Posterior vena cava (tissue), 2 donors: ENCODE measurements at regions of chr4 and their contacts with region 1.

Region 1: DNA sequence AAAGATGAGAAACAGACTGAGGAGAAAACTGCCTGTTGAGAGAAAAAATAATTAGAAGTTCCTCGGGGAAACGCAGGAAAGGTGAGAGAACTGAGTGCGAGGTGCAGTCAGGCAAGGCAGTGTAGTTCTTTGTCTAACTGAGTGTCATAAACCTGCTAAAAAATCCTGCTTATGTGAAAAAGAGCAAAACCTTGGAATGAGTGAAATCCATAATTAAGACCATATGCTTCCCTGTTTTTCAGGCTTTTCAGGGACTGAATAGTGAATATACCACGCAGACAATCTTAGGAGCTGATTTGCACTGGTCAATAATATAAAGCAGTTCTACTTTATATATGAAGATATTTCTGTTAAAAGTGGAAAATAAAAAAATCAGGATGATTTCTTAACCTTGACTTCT is 104.9 kb downstream of the RASGEF1B start:
- DNase-seq: no peak

Region 2: DNA sequence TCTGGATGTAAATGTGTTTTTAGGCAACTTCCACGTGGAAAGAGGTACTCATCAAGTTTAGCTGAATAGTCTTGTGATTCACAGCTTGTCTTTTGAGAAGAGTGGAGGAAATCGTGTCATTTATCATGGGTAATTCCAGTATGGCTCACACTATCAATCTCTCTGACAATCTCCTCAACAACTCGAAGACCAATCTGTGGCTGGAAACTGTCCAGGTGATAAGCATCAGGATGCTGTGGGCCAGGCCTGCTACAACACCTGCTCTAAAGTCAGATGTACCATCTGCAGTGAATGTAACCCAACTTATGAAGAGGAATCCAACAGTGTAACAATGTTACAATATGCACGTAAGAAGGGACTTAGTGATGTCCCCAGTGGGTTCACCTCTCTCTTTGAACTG is 1826.6 kb before region 1 on chr4:
- intact Hi-C with region 1: no loop called
- DNase-seq: no peak

Region 3: GRCh38 chr4:81307991-81308390 is 58.8 kb before region 1 on chr4:
- intact Hi-C with region 1: loop called in 1 of 2 experiments (anchors 2 kb)
- DNase-seq: no peak